ENCODE measurements at regions of chr14 and their contacts with region 1.

Region 1: DNA sequence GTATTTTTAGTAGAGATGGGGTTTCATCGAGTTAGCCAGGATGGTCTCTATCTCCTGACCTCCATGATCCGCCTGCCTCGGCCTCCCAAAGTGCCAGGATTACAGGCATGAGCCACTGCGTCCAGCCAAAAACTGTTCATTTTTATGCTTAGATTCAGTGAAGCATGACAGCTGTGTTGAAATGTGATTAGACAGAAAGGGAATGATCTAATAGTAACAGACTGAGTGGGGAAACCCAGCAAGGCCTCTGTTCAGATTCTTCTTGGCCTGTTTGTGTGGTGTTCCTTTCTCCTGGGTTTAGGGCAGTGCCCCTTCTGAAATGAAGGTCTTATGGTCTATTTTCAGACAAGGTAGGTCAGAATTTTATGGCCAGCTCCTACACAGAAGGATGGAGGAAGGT is 11.8 kb upstream of the ABCD4 start:
- DNase-seq: no peak
- H3K4me3 ChIP-seq: no peak overlapping the region
- H3K4me3 Mint-ChIP-seq: no peak overlapping the region
- H3K27ac Mint-ChIP-seq: no peak overlapping the region
- H3K4me1 ChIP-seq: no peaks in the 10 kb centered on the region
- H3K4me1 Mint-ChIP-seq: no peaks in the 10 kb centered on the region
- H3K27me3 ChIP-seq: no peaks in the 10 kb centered on the region
- H3K27me3 Mint-ChIP-seq: no peaks in the 10 kb centered on the region
- CTCF ChIP-seq: no peak

Region 2: GRCh38 chr14:74333909-74334308 is 19.3 kb after region 1 on chr14:
- CTCF ChIA-PET with region 1: interaction called, 11 read pairs
- POLR2A ChIA-PET with region 1: no interaction called
- intact Hi-C with region 1: no loop called
- DNase-seq: no peak
- H3K4me3 ChIP-seq: no peak overlapping the region
- H3K4me3 Mint-ChIP-seq: no peak overlapping the region
- H3K27ac Mint-ChIP-seq: no peak overlapping the region
- H3K4me1 ChIP-seq: no peaks in the 10 kb centered on the region
- H3K4me1 Mint-ChIP-seq: no peaks in the 10 kb centered on the region
- H3K27me3 ChIP-seq: no peaks in the 10 kb centered on the region
- H3K27me3 Mint-ChIP-seq: no peaks in the 10 kb centered on the region
- CTCF ChIP-seq: no peak

Region 3: DNA sequence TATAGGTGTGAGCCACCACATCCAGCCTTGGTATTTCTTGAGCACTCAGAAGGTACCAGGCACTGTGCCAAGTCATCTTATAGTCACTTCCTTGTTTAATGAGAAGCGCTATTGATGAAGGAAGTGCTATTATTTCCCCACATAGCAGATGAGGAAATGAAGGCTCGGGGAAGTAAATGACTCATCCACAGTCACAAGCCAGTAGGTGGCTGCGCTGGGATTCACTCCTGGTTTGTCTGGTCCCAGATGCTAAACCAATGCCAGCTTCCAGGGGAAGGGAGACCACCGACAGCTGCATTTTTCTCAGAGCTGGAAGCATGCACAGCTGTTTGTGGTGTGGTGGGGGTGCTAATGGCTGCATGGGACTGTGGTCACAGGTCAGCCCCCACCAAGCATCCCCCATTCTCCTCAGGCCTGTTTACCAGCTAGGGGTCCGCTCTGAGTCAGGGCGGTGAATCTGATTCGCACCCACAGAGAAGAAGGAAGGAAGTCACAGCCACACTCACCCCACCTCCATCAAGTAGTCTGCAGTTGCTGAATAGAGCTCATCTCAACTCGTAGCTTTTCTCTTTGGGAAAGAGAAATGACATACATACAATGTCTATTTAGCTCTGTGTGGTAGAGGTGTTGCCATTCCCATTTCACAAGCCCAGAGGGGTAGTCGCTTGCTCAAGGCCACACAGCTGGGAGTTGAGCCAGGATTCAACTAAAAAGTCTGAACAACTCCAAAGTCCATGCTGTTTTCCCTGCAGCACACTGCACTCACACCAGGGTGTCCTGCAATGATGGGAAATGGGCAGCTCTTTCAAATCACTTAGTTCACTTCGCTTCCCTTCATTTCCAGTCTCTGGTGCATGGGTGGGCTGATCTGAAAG is 303.7 kb after region 1 on chr14:
- CTCF ChIA-PET with region 1: no interaction called
- POLR2A ChIA-PET with region 1: no interaction called
- intact Hi-C with region 1: no loop called
- DNase-seq: no peak
- H3K4me3 ChIP-seq: no peak overlapping the region
- H3K4me3 Mint-ChIP-seq: no peak overlapping the region
- H3K27ac Mint-ChIP-seq: no peak overlapping the region
- H3K4me1 ChIP-seq: peaks cover 28% of the 10 kb centered on the region
- H3K4me1 Mint-ChIP-seq: peaks cover 16% of the 10 kb centered on the region
- H3K27me3 ChIP-seq: no peaks in the 10 kb centered on the region
- H3K27me3 Mint-ChIP-seq: peaks cover 7% of the 10 kb centered on the region
- CTCF ChIP-seq: no peak

Measured in Caco-2 (cell line).